Activated CD8-positive, alpha-beta T cell treated with anti-CD3 and anti-CD28 coated beads, Interleukin-2, amount 10 ng/mL, durations not matched to agents 7 days and 5 days (primary cell): ENCODE measurements at regions of chr9 and their contacts with region 1.

Region 1: GRCh38 chr9:136242908-136243525 is 2.6 kb downstream of the QSOX2 start:
- DNase-seq: no peak
- ATAC-seq: no peak
- H3K4me3 Mint-ChIP-seq: peak overlapping the region; percentile 95
- H3K27ac Mint-ChIP-seq: peak overlapping the region; percentile 90
- H3K4me1 Mint-ChIP-seq: peaks cover 52% of the 10 kb centered on the region
- H3K27me3 Mint-ChIP-seq: peaks cover 2% of the 10 kb centered on the region

Region 2: DNA sequence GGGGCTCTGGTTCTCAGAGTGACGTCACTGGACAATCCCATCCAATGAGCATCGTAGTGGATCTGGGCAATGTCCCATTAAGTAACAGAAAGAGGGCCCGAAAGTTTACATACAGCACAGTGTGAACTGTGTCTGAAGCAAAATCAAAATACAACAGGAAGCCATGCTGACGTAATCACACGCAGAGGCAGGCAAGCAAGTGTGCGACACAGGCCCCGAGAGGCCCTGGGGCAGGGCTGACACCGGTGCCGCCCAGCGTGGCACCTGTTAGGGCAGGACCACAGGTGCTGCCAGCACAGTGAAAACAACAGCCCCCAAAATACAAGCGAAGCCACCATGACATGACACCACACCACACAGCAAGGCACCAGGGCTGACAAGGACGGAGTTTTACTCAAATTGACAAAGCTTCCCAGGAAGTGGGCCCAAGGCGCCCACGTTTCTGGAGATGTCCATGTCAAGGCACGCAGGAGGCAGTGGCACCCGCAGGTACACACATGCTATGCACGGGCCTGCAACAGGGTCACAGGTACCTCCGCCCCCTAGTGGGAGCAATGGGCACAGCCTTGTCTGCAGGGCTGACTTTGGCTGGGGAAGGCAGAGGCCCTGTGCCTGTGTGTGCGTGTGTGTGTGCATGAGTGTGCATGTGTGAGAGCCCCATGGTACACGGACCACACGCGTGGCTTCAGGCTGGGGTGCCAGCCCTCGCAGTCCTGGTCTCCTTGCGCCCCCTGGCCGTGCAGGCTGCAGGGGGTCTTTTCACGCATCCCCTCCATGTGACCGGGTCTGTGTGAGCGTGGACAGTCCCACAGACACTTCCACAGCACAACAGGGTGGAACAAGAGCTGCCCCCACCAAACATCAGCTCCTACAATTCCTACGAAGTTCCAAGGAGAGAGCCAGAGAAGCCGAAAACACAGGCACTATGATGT is 17.0 kb before region 1 on chr9:
- CTCF ChIA-PET with region 1: interaction called, 10 read pairs
- POLR2A ChIA-PET with region 1: interaction called, 3 read pairs
- DNase-seq: peak; percentile 75
- ATAC-seq: peak; percentile 94
- H3K4me3 Mint-ChIP-seq: no peak overlapping the region
- H3K27ac Mint-ChIP-seq: no peak overlapping the region
- H3K4me1 Mint-ChIP-seq: peaks cover 13% of the 10 kb centered on the region
- H3K27me3 Mint-ChIP-seq: no peaks in the 10 kb centered on the region

Region 3: GRCh38 chr9:136429683-136430590 is 186.9 kb after region 1 on chr9:
- CTCF ChIA-PET with region 1: no interaction called
- POLR2A ChIA-PET with region 1: no interaction called
- DNase-seq: no peak
- ATAC-seq: no peak
- H3K4me3 Mint-ChIP-seq: no peak overlapping the region
- H3K27ac Mint-ChIP-seq: no peak overlapping the region
- H3K4me1 Mint-ChIP-seq: peaks cover 3% of the 10 kb centered on the region
- H3K27me3 Mint-ChIP-seq: no peaks in the 10 kb centered on the region

Region 4: DNA sequence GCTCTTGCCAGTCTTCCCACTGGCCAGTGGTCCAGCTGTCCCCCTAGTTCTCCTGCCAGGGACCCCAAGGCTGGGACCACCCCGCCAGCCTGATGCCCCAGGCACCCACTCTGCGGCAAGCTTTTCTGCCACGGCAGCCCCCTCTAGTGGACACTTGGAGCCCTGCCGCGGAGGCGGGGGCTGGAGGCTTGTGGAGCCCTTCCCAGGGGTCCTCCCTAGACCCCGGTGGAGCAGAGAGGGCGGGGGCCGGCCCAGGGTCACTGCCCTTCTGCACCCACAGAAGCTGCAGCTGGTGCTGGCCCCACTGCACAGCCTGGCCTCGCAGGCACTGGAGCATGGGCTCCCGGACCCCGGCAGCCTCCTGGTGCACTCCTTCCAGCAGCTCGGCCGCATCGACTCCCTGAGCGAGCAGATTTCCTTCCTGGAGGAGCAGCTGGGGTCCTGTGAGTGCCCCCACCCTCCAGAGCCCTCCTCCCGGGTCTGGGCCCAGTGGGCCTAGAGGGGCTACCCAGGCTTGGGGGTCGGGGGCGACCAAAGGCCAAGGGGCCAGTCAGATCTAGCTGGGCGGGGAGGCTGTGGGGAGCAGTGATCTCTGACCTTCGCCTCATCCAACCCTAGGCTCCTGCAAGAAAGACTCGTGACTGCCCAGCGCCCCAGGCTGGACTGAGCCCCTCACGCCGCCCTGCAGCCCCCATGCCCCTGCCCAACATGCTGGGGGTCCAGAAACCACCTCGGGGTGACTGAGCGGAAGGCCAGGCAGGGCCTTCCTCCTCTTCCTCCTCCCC is 428.8 kb after region 1 on chr9:
- CTCF ChIA-PET with region 1: no interaction called
- POLR2A ChIA-PET with region 1: no interaction called
- DNase-seq: peak; percentile 54
- ATAC-seq: peak; percentile 61
- H3K4me3 Mint-ChIP-seq: no peak overlapping the region
- H3K27ac Mint-ChIP-seq: no peak overlapping the region
- H3K4me1 Mint-ChIP-seq: peaks cover 3% of the 10 kb centered on the region
- H3K27me3 Mint-ChIP-seq: peaks cover 1% of the 10 kb centered on the region